ENCODE measurements at regions of chr2 and their contacts with region 1.

Region 1: DNA sequence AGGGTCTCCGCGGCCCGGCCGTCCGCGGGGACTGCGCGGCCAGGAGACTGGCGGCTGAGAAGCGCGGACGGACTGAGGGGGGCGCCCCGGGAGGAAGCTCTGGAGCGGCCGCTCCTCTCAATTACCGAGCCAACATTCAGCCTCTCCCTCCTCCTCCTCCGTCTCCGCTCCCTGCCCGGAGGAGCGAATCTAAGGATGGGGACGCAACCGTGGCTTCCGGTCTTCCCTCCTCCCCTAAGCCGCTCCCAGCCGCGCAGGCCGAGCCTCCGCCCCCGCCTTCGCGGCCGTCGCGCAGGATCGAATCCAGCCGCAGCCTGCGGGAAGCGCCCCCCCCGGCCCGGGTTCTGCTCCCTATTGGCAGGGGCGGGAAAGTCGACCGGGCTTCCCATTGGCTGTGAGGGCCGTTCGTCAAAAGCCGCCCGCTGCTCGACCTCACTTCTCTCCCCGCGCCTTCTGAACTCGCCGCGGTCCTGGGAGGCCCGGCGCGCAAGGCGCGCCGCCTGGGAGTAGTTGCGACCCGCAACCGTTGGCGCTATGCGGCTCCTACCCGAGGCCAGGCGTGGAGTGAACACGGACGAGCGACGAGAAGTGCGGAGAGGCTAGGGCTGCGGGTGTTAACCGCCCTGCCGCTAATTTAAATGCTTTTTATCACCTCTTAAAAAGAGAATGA is at the start of gene HNRNPLL:
- DNase-seq: peak; percentile 97
- H3K4me3 Mint-ChIP-seq: peak within 1 kb of the TSS; percentile 89
- H3K27ac Mint-ChIP-seq: peak within 1 kb of the TSS; percentile 89
- H3K4me1 Mint-ChIP-seq: peaks cover 46% of the 10 kb centered on the region
- H3K27me3 Mint-ChIP-seq: no peaks in the 10 kb centered on the region
- total RNA-seq, gene HNRNPLL: 104 to 119 TPM

Region 2: GRCh38 chr2:38323623-38324022 is 279.2 kb before region 1 on chr2:
- CTCF ChIA-PET with region 1: no interaction called
- POLR2A ChIA-PET with region 1: no interaction called
- DNase-seq: no peak
- H3K4me3 Mint-ChIP-seq: no peak overlapping the region
- H3K27ac Mint-ChIP-seq: no peak overlapping the region
- H3K4me1 Mint-ChIP-seq: peaks cover 8% of the 10 kb centered on the region
- H3K27me3 Mint-ChIP-seq: no peaks in the 10 kb centered on the region

Region 3: GRCh38 chr2:38438883-38439612 is 163.8 kb before region 1 on chr2:
- CTCF ChIA-PET with region 1: no interaction called
- POLR2A ChIA-PET with region 1: no interaction called
- DNase-seq: no peak
- H3K4me3 Mint-ChIP-seq: no peak overlapping the region
- H3K27ac Mint-ChIP-seq: no peak overlapping the region
- H3K4me1 Mint-ChIP-seq: peaks cover 6% of the 10 kb centered on the region
- H3K27me3 Mint-ChIP-seq: peaks cover 14% of the 10 kb centered on the region

Region 4: DNA sequence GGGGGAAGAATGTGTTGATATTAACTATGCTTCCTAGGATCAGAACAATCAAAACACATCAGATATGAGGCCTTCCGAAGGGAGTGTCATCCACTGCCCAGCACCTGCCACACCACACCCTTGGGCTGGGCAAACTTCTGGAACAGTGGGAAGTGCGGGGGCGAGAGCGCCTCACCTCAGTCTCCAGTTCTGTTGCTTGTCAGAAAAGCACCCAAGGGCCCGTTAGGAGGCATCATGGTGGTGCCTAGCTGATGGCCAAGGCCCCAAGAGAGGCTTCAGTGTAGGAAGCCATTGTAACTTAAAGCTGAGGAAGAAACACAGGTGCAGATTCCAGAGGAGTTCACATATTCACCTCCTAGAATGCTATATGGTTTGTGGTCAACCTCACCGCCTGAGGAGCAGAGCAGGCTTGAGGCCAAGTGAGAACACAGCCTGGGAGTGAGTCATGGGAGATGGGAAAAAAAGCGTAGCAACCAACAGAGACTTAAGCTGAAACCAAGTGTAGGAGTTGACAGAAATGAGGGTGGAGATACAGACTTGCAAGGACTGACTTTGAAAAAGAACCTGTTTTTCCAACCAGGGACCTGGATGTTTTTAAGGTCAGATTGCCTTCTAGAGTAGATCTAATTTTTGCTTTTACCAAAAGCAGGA is 140.6 kb before region 1 on chr2:
- CTCF ChIA-PET with region 1: no interaction called
- POLR2A ChIA-PET with region 1: no interaction called
- DNase-seq: no peak
- H3K4me3 Mint-ChIP-seq: no peak overlapping the region
- H3K27ac Mint-ChIP-seq: no peak overlapping the region
- H3K4me1 Mint-ChIP-seq: peaks cover 7% of the 10 kb centered on the region
- H3K27me3 Mint-ChIP-seq: peaks cover 14% of the 10 kb centered on the region

Region 5: DNA sequence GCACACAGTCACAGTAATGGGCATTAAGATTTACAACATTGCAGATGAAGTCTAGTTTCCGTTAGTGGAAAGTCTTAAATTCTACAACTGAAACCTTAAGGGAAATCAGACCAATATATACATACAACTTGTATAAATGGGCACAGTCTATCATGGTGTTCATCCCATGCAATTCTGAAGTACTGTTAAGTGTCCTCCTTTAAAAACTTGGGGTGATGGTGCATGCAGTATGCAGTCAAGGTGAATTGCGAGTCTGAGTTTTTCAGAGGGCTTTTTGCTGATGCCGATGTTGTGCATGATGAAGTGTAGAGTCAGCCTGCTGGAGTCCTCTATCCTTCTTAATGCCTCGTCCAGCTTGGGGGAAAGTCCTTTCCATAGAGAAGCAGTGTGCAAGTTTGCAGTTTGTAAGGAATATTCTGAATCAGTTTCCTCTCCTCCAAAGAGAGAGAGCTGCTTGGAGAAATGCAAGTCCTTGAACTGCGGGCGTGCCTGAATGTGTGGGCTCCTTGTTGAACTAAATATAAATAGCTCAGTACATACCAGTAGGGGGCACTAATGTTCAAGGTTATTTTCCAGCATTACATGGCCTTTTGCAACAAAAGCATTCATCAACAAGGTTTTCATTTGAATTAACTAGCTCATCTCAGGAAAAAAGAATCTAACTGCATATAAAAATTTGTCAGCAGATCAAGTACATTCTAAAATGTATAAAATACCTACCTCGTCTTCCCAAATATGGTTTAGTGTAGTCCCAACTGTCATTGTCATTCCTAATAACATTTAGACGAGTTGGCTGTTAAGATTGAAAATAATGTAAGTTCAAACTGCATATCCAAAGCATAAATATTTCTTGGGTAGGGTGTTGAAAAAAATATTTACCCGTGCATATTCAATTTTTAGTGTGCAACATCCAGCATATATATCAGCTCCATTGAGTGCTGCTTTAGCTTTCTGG is 21.4 kb before region 1 on chr2:
- CTCF ChIA-PET with region 1: interaction called, 84 read pairs
- POLR2A ChIA-PET with region 1: interaction called, 33 read pairs
- DNase-seq: peak; percentile 36
- H3K4me3 Mint-ChIP-seq: no peak overlapping the region
- H3K27ac Mint-ChIP-seq: peak overlapping the region; percentile 61
- H3K4me1 Mint-ChIP-seq: peaks cover 74% of the 10 kb centered on the region
- H3K27me3 Mint-ChIP-seq: no peaks in the 10 kb centered on the region

Region 6: DNA sequence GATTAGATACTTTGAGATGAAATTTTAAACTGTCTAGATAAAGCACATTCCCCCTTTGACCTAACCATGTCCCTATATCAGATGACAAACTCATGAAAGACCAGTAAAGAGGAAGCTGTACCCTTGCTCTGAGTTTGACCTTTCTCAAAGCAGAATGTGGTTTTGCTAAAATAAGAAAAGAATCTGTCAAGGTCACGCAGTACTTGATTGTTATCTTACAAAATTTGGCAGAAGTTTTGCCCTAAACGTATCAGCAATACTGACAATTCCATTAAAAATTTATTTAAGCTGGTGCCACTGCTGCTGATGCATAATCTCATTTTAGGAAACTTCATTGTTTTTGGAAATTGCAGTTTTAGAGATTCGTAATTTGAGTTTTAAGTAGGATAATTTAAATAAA is 31.8 kb after region 1 on chr2:
- CTCF ChIA-PET with region 1: interaction called, 11 read pairs
- POLR2A ChIA-PET with region 1: interaction called, 9 read pairs
- DNase-seq: no peak
- H3K4me3 Mint-ChIP-seq: no peak overlapping the region
- H3K27ac Mint-ChIP-seq: peak overlapping the region; percentile 52
- H3K4me1 Mint-ChIP-seq: peaks cover 43% of the 10 kb centered on the region
- H3K27me3 Mint-ChIP-seq: no peaks in the 10 kb centered on the region

Region 7: DNA sequence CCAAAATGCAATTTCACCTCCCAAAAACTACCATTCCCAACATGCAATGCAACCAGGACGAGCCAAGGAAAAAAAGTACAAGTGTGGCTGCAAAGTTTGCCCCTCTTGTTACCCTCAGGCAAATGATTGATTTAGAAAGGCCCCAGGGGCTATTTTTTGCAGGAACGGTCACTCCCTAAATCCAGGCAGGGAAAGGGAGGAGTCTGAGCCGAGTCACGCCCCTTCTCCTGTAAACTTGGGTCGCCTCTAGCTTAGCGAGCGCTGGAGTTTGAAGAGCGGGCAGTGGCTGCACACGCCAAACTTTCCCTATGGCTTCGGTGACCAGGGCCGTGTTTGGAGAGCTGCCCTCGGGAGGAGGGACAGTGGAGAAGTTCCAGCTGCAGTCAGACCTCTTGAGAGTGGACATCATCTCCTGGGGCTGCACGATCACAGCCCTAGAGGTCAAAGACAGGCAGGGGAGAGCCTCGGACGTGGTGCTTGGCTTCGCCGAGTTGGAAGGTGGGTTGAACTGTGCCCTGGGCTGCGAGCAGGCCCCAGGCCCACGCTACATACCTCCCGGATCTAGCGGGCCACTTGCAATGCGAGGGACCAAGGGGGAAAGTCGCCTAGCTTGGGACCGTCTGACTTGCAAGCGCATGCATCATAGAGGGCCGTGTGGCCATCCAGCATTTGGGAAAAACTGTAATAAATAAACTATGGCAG is 63.1 kb after region 1 on chr2 and contains the start of gene GALM:
- CTCF ChIA-PET with region 1: interaction called, 117 read pairs
- POLR2A ChIA-PET with region 1: interaction called, 646 read pairs
- DNase-seq: peak; percentile 74
- H3K4me3 Mint-ChIP-seq: peak within 1 kb of the TSS; percentile 98
- H3K27ac Mint-ChIP-seq: peak within 1 kb of the TSS; percentile 97
- H3K4me1 Mint-ChIP-seq: peaks cover 71% of the 10 kb centered on the region
- H3K27me3 Mint-ChIP-seq: no peaks in the 10 kb centered on the region
- total RNA-seq, gene GALM: 94.7 to 97.4 TPM

Region 8: GRCh38 chr2:38690499-38691294 is 87.8 kb after region 1 on chr2:
- CTCF ChIA-PET with region 1: interaction called, 109 read pairs
- POLR2A ChIA-PET with region 1: interaction called, 7 read pairs
- DNase-seq: no peak
- H3K4me3 Mint-ChIP-seq: no peak overlapping the region
- H3K27ac Mint-ChIP-seq: peak overlapping the region; percentile 44
- H3K4me1 Mint-ChIP-seq: peaks cover 77% of the 10 kb centered on the region
- H3K27me3 Mint-ChIP-seq: no peaks in the 10 kb centered on the region

Region 9: GRCh38 chr2:38709567-38710194 is 106.8 kb after region 1 on chr2:
- CTCF ChIA-PET with region 1: interaction called, 12 read pairs
- POLR2A ChIA-PET with region 1: interaction called, 8 read pairs
- DNase-seq: peak; percentile 36
- H3K4me3 Mint-ChIP-seq: peak overlapping the region; percentile 24
- H3K27ac Mint-ChIP-seq: peak overlapping the region; percentile 95
- H3K4me1 Mint-ChIP-seq: peaks cover 75% of the 10 kb centered on the region
- H3K27me3 Mint-ChIP-seq: no peaks in the 10 kb centered on the region

Region 10: DNA sequence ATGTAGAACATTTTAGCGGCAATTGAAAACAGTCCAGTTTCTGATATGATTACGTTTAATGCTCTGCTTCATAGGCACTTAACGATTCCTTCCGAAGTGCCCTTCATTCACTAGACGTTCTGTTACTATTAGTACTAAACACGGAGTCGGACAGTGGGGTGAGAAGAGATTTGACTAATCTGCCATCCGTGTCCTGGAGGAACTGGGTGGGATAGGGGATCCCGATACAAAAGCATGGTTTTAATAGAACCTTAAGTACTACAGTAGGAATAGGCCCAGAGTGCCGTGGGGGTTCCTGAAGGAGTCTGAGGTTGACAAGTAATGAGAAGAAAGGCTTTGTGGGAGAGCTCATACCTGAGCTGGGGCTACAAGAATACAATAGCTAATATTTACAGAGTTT is 273.5 kb after region 1 on chr2:
- CTCF ChIA-PET with region 1: no interaction called
- POLR2A ChIA-PET with region 1: no interaction called
- DNase-seq: no peak
- H3K4me3 Mint-ChIP-seq: peak overlapping the region; percentile 95
- H3K27ac Mint-ChIP-seq: peak overlapping the region; percentile 9
- H3K4me1 Mint-ChIP-seq: peaks cover 21% of the 10 kb centered on the region
- H3K27me3 Mint-ChIP-seq: no peaks in the 10 kb centered on the region

Measured in activated CD4-positive, alpha-beta memory T cell treated with anti-CD3 and anti-CD28 coated beads, Interleukin-2, amount 10 ng/mL, durations not matched to agents 7 days and 5 days (primary cell).